ENCODE measurements at regions of chr9 and their contacts with region 1.

Region 1: GRCh38 chr9:114786251-114786650 is 19.6 kb downstream of the TNFSF15 start:
- DNase-seq: no peak
- ATAC-seq: no peak
- H3K4me3 ChIP-seq: no peak overlapping the region
- H3K27ac ChIP-seq: no peak overlapping the region
- H3K4me1 ChIP-seq: no peaks in the 10 kb centered on the region
- H3K27me3 ChIP-seq: peaks cover 0 to 4% (median 0%) of the 10 kb centered on the region in 7 donors
- CTCF ChIP-seq: no peak

Region 2: DNA sequence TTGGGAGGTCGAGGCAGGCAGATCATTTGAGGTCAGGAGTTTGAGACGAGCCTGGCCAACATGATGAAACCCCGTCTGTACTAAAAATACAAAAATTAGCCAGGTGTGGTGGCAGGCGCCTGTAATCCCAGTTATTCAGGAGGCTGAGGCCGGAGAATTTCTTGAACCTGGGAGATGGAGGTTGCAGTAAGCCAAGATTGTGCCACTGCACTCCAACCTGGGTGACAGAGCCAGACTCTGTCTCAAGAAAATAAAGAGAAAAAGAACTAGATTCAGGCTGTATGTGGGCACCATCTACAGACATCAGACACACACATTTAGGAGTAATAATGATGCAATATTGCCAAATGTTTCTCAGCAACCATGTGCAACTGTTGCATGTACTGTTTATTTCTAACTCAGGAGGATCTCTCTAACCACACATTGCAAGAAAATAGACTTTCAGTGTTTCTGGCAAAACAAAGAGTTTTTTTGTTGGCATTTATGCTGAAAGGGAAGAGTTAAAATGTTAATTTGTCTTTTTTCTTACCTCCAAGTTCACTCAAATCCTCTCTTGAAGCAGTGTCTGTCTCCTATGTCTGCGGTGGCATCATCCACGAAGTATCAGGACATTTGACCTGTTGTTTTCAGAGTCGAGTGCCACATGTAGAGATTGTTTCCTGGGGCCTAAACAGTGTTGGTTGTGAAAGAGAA is 468.4 kb before region 1 on chr9:
- intact Hi-C with region 1: no loop called
- DNase-seq: no peak
- ATAC-seq: no peak
- H3K4me3 ChIP-seq: no peak overlapping the region
- H3K27ac ChIP-seq: no peak overlapping the region
- H3K4me1 ChIP-seq: peaks cover 0 to 8% (median 0%) of the 10 kb centered on the region in 9 donors
- H3K27me3 ChIP-seq: peaks cover 0 to 21% (median 4%) of the 10 kb centered on the region in 7 donors
- CTCF ChIP-seq: no peak

Region 3: DNA sequence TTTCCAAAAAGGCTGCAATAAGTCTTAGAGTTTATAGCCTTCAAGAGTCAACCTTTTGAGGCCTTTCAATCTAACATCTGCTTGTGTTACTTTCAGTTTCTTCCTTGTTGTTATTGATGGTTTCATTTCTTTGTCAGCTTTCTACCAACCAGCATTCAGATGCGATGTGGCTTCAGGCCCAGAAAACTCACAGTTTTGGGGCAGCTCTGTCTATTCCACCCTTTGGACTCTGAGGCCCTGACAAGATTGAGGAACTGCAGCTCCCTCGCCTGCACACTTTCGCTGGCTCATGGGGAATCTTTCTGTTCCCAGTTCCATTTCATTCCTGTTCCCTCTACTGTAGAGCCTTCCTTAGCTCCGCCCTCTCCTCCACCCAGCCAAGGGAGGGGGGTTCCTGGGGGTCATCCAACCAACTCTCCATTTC is 267.6 kb before region 1 on chr9:
- intact Hi-C with region 1: no loop called
- DNase-seq: no peak
- ATAC-seq: peak in 1 of 8 donors; percentile 20
- H3K4me3 ChIP-seq: no peak overlapping the region
- H3K27ac ChIP-seq: peak overlapping the region in 1 of 10 donors; percentile 36
- H3K4me1 ChIP-seq: peaks cover 0 to 8% (median 0%) of the 10 kb centered on the region in 9 donors
- H3K27me3 ChIP-seq: peaks cover 0 to 87% (median 60%) of the 10 kb centered on the region in 7 donors
- CTCF ChIP-seq: no peak

Region 4: GRCh38 chr9:114894801-114895433 is 108.7 kb after region 1 on chr9:
- intact Hi-C with region 1: loop called in 1 of 10 experiments (anchors 10 kb)
- DNase-seq: peak in 1 of 2 donors; percentile 29
- ATAC-seq: peak; percentile 64 to 94 (median 84)
- H3K4me3 ChIP-seq: no peak overlapping the region
- H3K27ac ChIP-seq: peak overlapping the region in 6 of 10 donors; percentile 14 to 74 (median 46)
- H3K4me1 ChIP-seq: peaks cover 0 to 65% (median 15%) of the 10 kb centered on the region in 9 donors
- H3K27me3 ChIP-seq: peaks cover 0 to 9% (median 0%) of the 10 kb centered on the region in 7 donors
- CTCF ChIP-seq: no peak

Measured in heart right ventricle (tissue), 16 donors.